Activated B cell treated with CpG ODN at 0.5 μM for 24 hours (primary cell): ENCODE measurements at regions of chr10 and their contacts with region 1.

Region 1: GRCh38 chr10:43304687-43305340 is 37.9 kb upstream of the RASGEF1A start:
- DNase-seq: peak; percentile 31
- ATAC-seq: peak; percentile 52
- H3K4me3 Mint-ChIP-seq: peak overlapping the region; percentile 78
- H3K27ac Mint-ChIP-seq: no peak overlapping the region
- H3K4me1 Mint-ChIP-seq: peaks cover 9% of the 10 kb centered on the region
- H3K27me3 Mint-ChIP-seq: peaks cover 21% of the 10 kb centered on the region
- CTCF ChIP-seq: no peak

Region 2: DNA sequence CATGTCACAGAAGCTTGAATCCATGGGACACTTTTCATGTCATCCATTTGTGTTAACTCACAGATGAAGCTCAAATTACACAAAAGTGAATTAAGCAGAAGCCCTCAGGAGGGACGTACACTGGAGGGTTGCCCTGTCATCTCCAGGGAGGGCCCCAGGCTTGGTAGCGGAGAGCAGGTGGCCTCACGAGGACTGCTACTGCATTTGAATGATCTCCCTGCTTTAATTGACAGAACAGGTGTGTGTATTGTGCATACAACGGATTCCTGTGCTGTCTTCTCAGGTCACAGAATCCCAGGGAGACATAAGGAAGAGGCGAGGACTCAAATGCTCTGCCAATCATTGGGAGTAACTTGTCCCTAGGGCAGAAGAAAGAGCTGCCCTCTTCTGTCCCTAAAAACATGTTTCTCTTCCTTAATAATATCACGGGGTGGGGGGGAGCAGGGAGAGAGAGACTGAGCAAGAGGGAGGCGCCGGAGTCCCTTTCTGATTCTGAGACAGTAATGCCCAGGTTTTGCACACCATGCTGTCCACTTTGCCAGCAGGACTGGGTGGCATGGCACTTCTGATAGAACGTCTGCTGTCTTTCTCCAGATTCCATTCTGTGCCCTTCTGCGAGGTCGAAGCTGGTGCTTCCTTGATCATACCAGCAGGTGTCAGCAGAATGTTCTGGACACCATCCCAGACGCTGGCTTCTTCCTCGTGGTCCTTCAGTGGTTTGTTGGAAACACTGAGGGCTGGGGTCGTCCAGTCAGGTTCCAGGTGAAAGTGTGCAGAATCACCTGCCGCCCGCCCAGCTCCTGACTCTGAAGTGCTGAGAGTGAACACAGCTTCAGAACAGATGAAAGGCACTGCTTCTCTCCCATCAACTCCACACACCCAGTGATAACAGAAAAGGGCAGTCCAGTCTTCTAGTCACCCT is 11.8 kb before region 1 on chr10:
- CTCF ChIA-PET with region 1: interaction called, 11 read pairs
- POLR2A ChIA-PET with region 1: no interaction called
- intact Hi-C with region 1: no loop called
- DNase-seq: no peak
- ATAC-seq: peak; percentile 66
- H3K4me3 Mint-ChIP-seq: no peak overlapping the region
- H3K27ac Mint-ChIP-seq: no peak overlapping the region
- H3K4me1 Mint-ChIP-seq: peaks cover 6% of the 10 kb centered on the region
- H3K27me3 Mint-ChIP-seq: peaks cover 7% of the 10 kb centered on the region
- CTCF ChIP-seq: no peak

Region 3: GRCh38 chr10:44898635-44899034 is 1593.8 kb after region 1 on chr10:
- CTCF ChIA-PET with region 1: no interaction called
- POLR2A ChIA-PET with region 1: no interaction called
- intact Hi-C with region 1: loop called (anchors 5 kb)
- DNase-seq: no peak
- ATAC-seq: no peak
- H3K4me3 Mint-ChIP-seq: no peak overlapping the region
- H3K27ac Mint-ChIP-seq: no peak overlapping the region
- H3K4me1 Mint-ChIP-seq: no peaks in the 10 kb centered on the region
- H3K27me3 Mint-ChIP-seq: peaks cover 3% of the 10 kb centered on the region
- CTCF ChIP-seq: no peak